Transverse colon (tissue), 4 donors: ENCODE measurements at regions of chr9 and their contacts with region 1.

Region 1: DNA sequence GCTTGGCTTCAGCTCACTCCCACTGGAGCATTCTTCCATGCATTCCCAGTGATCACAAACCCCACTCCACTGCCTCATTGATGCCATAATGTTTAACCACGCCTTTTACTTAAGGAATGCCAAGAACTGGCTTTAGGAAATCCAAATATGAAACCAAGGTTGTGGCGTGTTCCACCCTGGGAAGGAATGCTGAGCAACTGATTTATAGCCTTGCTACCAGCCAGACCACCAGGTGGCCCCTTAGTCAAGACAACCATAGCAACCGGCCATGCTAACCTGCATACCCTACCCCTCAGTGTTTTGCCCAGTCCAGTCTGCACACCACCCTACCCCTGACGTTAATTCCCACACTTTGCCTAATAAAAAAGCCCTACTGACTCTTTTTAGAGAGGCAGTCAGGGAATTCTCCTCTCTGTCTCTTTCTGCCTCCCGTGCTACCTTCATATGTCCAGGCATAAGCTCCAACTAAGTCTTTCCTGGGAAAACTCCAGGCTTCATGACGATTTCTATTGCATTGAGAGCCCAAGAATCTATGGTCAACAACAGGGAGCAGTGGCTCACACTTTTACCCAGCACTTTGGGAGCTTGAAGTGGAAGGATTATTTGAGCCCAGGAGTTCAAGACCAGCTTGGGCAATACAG is 27.0 kb upstream of the PRRC2B start:
- DNase-seq: peak; percentile 25
- H3K4me3 ChIP-seq: no peak overlapping the region
- H3K27ac ChIP-seq: no peak overlapping the region
- H3K4me1 ChIP-seq: no peaks in the 10 kb centered on the region
- H3K27me3 ChIP-seq: no peaks in the 10 kb centered on the region
- CTCF ChIP-seq: no peak
- EP300 ChIP-seq: no peak
- POLR2A ChIP-seq: no peak

Region 2: GRCh38 chr9:131046581-131047202 is 320.2 kb before region 1 on chr9:
- in situ Hi-C with region 1: no loop called
- intact Hi-C with region 1: no loop called
- DNase-seq: peak; percentile 62
- H3K4me3 ChIP-seq: no peak overlapping the region
- H3K27ac ChIP-seq: no peak overlapping the region
- H3K4me1 ChIP-seq: peaks cover 0 to 5% (median 2%) of the 10 kb centered on the region in 4 donors
- H3K27me3 ChIP-seq: peaks cover 12% of the 10 kb centered on the region
- CTCF ChIP-seq: peak; percentile 80 to 92 (median 87)
- EP300 ChIP-seq: no peak
- POLR2A ChIP-seq: no peak

Region 3: GRCh38 chr9:131423171-131423581 is 56.3 kb after region 1 on chr9:
- in situ Hi-C with region 1: no loop called
- intact Hi-C with region 1: loop called (anchors 10 kb)
- DNase-seq: peak; percentile 59
- H3K4me3 ChIP-seq: no peak overlapping the region
- H3K27ac ChIP-seq: peak overlapping the region; percentile 50 to 84 (median 69)
- H3K4me1 ChIP-seq: peaks cover 45 to 58% (median 52%) of the 10 kb centered on the region in 4 donors
- H3K27me3 ChIP-seq: no peaks in the 10 kb centered on the region
- CTCF ChIP-seq: no peak
- EP300 ChIP-seq: no peak
- POLR2A ChIP-seq: no peak

Region 4: GRCh38 chr9:131478421-131478868 is 111.6 kb after region 1 on chr9:
- in situ Hi-C with region 1: loop called in 2 of 4 experiments (anchors 10 to 25 kb)
- intact Hi-C with region 1: no loop called
- DNase-seq: peak; percentile 44
- H3K4me3 ChIP-seq: no peak overlapping the region
- H3K27ac ChIP-seq: no peak overlapping the region
- H3K4me1 ChIP-seq: no peaks in the 10 kb centered on the region
- H3K27me3 ChIP-seq: no peaks in the 10 kb centered on the region
- CTCF ChIP-seq: peak; percentile 50 to 63 (median 57)
- EP300 ChIP-seq: no peak
- POLR2A ChIP-seq: no peak